Naive thymus-derived CD8-positive, alpha-beta T cell (primary cell): ENCODE measurements at regions of chr9 and their contacts with region 1.

Region 1: DNA sequence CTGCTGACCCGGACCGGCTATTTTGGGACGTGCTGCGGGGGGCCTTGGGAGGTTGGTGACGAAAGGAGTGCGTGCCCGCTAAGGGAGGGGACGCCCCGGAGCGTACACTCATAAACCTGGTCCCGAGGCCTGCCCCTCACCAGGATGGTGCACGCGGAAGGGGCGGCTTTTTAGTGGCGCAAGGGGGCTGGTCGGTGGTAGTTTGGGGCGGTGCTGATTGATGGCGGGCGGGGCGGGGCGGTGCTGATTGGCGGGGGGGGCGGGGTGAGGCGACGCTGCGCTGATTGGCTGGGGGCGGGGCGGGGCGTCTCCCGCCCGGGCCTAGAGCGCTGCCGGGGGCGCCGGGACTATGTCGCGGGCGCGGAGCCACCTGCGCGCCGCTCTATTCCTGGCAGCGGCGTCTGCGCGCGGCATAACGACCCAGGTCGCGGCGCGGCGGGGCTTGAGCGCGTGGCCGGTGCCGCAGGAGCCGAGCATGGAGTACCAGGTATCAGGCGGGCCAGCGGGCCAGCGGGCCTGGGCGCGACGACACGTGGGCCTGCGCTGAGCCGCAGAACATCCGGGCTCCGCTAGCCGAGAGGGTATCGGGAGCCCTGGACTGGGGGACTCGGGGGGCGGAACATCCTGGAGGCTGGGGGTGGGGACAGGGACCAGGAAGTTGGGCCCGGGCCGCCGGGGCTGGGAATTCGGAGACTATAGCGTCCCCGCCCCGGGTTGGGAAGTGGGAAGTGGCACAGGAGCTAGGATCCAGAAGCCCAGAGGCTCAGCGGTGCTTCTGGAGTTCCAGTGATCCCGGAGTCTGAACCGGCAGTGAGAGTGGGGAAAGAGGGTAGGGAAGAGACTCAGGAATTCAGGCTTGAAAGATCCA is at the start of gene FPGS:
- DNase-seq: peak; percentile 70 to 91 (median 84)
- ATAC-seq: peak; percentile 82 to 89
- H3K4me3 Mint-ChIP-seq: peak within 1 kb of the TSS; percentile 87 to 97 (median 94)
- H3K27ac Mint-ChIP-seq: peak within 1 kb of the TSS; percentile 84 to 97 (median 94)
- H3K4me1 Mint-ChIP-seq: peaks cover 4 to 47% (median 35%) of the 10 kb centered on the region in 4 donors
- H3K27me3 Mint-ChIP-seq: no peaks in the 10 kb centered on the region
- polyA plus RNA-seq, gene FPGS: 51.7 to 54.8 (median 53.4) TPM

Region 2: DNA sequence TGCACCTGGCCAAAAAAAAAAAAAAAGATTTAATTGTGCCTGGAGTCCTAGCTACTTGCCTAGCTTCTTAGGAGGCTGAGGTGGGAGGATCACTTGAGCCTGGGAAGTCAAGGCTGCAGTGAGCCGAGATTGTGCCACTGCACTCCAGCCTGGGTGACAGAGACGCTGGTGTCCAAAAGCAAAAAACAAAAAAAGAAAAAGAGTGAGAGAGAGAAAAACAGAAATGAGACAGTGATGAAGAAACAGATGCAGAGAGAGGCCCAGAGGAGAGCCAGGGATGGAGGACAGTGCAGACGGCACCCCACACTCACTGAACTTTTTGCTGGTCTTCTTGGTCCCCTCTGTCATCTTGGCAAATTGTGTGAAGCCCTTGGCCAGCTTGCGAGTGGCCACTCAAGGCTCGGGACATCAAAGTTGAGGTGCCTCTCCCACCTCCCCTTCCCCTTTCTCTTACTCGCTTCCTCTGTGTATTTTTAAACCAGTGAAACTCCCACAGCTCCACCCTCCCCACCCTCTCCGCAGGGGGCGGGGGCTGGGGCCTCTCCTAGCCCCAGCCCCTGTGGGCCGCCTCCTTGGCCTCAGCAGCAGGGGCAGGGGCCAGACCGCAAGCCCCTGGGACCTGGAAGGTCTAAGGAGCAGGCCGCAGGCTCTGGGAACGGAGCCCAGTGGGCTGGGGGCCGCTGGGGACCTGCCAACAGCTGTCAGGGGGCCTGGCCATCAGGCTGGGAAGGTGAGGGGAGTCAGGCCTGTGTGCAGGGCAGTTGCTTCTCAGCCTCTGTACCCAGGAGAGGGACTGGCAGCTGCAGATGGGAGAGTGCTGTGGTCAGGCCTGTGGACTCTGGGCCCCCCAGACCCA is 24.3 kb before region 1 on chr9 and contains the start of gene SH2D3C:
- POLR2A ChIA-PET with region 1: no interaction called
- DNase-seq: peak in 4 of 10 donors; percentile 38 to 45 (median 40)
- ATAC-seq: peak; percentile 22 to 41
- H3K4me3 Mint-ChIP-seq: peak within 1 kb of the TSS; percentile 90 to 100 (median 98)
- H3K27ac Mint-ChIP-seq: peak within 1 kb of the TSS; percentile 93 to 99 (median 97)
- H3K4me1 Mint-ChIP-seq: peaks cover 26 to 79% (median 61%) of the 10 kb centered on the region in 4 donors
- H3K27me3 Mint-ChIP-seq: no peaks in the 10 kb centered on the region
- polyA plus RNA-seq, gene SH2D3C: 13.8 to 50.8 (median 23.5) TPM

Region 3: DNA sequence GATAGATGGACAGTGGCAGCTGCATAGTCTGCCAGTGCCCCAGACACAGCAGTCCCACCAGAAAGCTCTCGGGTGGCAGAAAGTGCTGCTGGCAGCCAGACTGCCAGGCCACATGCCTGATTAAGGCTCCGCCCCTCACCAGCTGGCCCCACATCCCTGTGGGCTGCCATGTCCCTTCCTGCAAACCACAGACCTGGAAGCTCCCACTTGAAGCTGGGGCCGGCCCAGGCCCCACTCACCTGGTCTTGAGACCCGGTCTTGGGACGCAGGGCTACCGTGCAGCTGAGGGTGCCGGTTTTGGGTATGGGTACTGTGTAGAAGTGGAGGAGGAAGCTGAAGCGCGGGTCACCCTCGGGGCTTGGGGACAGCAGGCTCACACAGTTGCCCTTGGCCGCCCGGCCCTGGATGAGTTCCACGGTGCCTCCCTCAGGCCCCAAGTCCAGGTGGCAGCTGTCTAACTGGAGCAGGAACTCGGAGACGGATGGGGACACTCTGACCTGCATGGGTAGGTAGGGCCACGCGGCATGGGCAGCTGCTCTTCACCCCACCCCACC is 15.1 kb after region 1 on chr9:
- POLR2A ChIA-PET with region 1: interaction called, 10 read pairs
- DNase-seq: no peak
- ATAC-seq: no peak
- H3K4me3 Mint-ChIP-seq: no peak overlapping the region
- H3K27ac Mint-ChIP-seq: peak overlapping the region in 5 of 10 donors; percentile 56 to 84 (median 65)
- H3K4me1 Mint-ChIP-seq: peaks cover 0 to 3% (median under 1%) of the 10 kb centered on the region in 4 donors
- H3K27me3 Mint-ChIP-seq: no peaks in the 10 kb centered on the region

Region 4: DNA sequence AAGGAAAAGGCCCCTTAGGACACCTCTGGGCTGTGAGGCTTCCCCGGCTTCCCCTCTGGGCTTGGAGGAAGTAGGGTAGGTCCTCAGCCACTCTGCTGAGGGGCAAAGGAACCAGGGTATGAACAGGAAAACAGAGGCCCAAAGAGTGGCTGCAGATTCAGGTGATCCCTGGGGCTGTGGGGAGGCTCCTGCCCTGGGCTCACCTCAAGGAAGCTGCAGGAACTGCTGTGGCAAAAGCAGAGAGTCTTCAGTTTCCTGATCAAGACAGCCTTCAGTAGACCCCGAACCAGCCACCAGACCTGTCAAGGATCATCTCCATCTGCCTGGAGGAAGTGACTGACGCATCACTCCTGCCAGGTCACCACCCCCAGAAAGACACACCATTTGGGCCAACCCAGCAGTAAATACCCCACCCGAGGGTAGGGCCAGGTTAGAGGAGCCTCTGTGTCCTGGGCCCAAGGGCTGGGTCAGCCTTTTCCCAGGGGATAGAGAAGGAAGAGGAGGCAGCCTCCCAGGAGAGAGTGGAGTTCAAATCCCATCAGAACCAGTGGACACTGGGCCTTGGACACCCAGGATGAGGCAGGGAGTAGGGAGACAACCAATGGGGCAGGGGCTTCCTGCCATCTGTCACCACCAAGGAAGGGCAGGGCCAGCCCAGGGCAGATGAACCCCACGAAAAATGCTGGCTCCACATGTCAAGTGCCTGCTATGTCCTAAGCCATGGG is 102.4 kb after region 1 on chr9:
- POLR2A ChIA-PET with region 1: interaction called, 12 read pairs
- DNase-seq: peak; percentile 41 to 80 (median 63)
- ATAC-seq: peak; percentile 48 to 62
- H3K4me3 Mint-ChIP-seq: peak overlapping the region; percentile 82 to 99 (median 95)
- H3K27ac Mint-ChIP-seq: peak overlapping the region; percentile 98 to 100 (median 100)
- H3K4me1 Mint-ChIP-seq: peaks cover 19 to 61% (median 51%) of the 10 kb centered on the region in 4 donors
- H3K27me3 Mint-ChIP-seq: no peaks in the 10 kb centered on the region